CD8-positive, alpha-beta memory T cell (primary cell): ENCODE measurements at regions of chr10 and their contacts with region 1.

Region 1: DNA sequence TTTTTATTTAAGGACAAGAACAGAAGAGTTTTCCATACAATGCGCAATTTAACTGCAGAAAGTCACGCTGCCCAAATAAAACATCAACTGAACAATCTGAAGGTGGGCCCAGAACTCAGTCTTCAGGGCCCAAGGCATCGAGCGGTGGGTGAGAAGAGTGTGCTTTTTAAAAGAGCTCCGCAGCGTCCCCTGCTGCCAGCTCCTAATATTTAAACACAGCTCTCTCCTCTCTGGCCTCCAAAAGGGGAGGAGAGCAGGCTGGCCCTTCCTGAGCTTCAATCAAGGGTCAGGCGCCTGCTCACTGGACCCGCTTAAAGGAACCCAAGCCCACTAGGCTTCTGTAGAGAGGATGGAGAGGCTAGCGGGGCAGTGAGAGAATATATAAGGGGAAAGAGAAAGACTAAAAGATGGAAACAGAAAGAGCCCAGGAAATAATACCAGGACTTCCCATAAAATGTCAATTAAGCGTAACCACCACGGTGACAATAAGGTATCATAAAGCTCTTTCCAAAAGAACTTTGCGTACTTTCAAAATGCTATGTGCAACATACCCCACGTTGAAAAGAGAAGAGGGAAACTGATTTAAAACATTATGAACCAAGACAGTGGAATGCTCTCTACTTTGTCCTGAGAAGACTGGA is 2.8 kb downstream of the FAM53B start:
- DNase-seq: peak; percentile 69 to 82 (median 71)
- H3K4me3 ChIP-seq: peak overlapping the region; percentile 74
- H3K4me3 Mint-ChIP-seq: peak overlapping the region; percentile 95 to 100 (median 98)
- H3K27ac ChIP-seq: peak overlapping the region; percentile 53
- H3K27ac Mint-ChIP-seq: peak overlapping the region; percentile 89 to 98 (median 96)
- H3K4me1 ChIP-seq: peaks cover 72% of the 10 kb centered on the region
- H3K4me1 Mint-ChIP-seq: peaks cover 70 to 77% (median 77%) of the 10 kb centered on the region in 3 donors
- H3K27me3 ChIP-seq: no peaks in the 10 kb centered on the region
- H3K27me3 Mint-ChIP-seq: peaks cover 0 to 1% of the 10 kb centered on the region in 2 donors

Region 2: GRCh38 chr10:124453960-124454610 is 287.3 kb before region 1 on chr10:
- CTCF ChIA-PET with region 1: no interaction called
- POLR2A ChIA-PET with region 1: no interaction called
- DNase-seq: no peak
- H3K4me3 ChIP-seq: no peak overlapping the region
- H3K4me3 Mint-ChIP-seq: no peak overlapping the region
- H3K27ac ChIP-seq: no peak overlapping the region
- H3K27ac Mint-ChIP-seq: no peak overlapping the region
- H3K4me1 ChIP-seq: peaks cover 2% of the 10 kb centered on the region
- H3K4me1 Mint-ChIP-seq: peaks cover 9 to 15% (median 13%) of the 10 kb centered on the region in 3 donors
- H3K27me3 ChIP-seq: peaks cover 20% of the 10 kb centered on the region
- H3K27me3 Mint-ChIP-seq: peaks cover 57 to 72% of the 10 kb centered on the region in 2 donors

Region 3: GRCh38 chr10:124545351-124546054 is 195.9 kb before region 1 on chr10:
- CTCF ChIA-PET with region 1: interaction called, 154 read pairs
- POLR2A ChIA-PET with region 1: interaction called, 6 read pairs
- DNase-seq: no peak
- H3K4me3 ChIP-seq: no peak overlapping the region
- H3K4me3 Mint-ChIP-seq: peak overlapping the region in 5 of 7 donors; percentile 15 to 51 (median 19)
- H3K27ac ChIP-seq: no peak overlapping the region
- H3K27ac Mint-ChIP-seq: peak overlapping the region in 1 of 8 donors; percentile 58
- H3K4me1 ChIP-seq: peaks cover 14% of the 10 kb centered on the region
- H3K4me1 Mint-ChIP-seq: peaks cover 11 to 21% (median 19%) of the 10 kb centered on the region in 3 donors
- H3K27me3 ChIP-seq: no peaks in the 10 kb centered on the region
- H3K27me3 Mint-ChIP-seq: no peaks in the 10 kb centered on the region

Region 4: GRCh38 chr10:124632064-124632531 is 109.3 kb before region 1 on chr10:
- CTCF ChIA-PET with region 1: interaction called, 27 read pairs
- POLR2A ChIA-PET with region 1: interaction called, 4 read pairs
- DNase-seq: peak in 4 of 5 donors; percentile 26 to 64 (median 32)
- H3K4me3 ChIP-seq: no peak overlapping the region
- H3K4me3 Mint-ChIP-seq: peak overlapping the region in 1 of 7 donors; percentile 13
- H3K27ac ChIP-seq: no peak overlapping the region
- H3K27ac Mint-ChIP-seq: peak overlapping the region in 7 of 8 donors; percentile 50 to 94 (median 82)
- H3K4me1 ChIP-seq: peaks cover 64% of the 10 kb centered on the region
- H3K4me1 Mint-ChIP-seq: peaks cover 65 to 94% (median 81%) of the 10 kb centered on the region in 3 donors
- H3K27me3 ChIP-seq: no peaks in the 10 kb centered on the region
- H3K27me3 Mint-ChIP-seq: no peaks in the 10 kb centered on the region

Region 5: DNA sequence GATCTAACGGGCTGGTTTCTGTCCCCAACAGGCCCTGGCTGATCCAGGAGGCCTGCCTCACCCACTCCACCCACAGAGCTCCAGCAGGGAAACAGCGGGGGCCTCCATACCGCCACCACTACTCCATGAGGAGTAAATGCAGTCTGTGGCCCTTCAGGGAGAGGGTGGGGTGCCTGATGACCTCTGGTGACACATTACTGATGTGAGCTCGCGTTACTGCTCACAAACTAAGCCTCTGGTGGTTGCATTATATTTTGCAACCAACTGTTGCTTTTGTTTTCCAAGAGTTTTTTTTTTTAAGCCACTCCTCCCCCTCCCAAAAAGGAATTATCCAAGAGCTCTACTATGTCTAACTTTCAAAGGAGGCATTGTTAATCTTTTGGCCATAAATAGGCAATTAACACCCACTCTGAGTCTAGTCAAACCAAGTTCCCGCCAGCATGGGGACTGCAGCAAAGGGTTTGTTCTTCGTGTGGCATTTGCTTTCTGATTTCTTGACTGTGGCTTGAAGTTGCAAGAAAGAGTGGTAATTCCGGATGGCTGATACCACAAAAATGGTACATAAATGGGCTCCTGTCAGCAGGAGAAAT is 69.8 kb before region 1 on chr10:
- CTCF ChIA-PET with region 1: interaction called, 21 read pairs
- POLR2A ChIA-PET with region 1: interaction called, 4 read pairs
- DNase-seq: no peak
- H3K4me3 ChIP-seq: peak overlapping the region; percentile 3
- H3K4me3 Mint-ChIP-seq: peak overlapping the region; percentile 14 to 85 (median 59)
- H3K27ac ChIP-seq: peak overlapping the region; percentile 5
- H3K27ac Mint-ChIP-seq: peak overlapping the region; percentile 76 to 97 (median 88)
- H3K4me1 ChIP-seq: peaks cover 100% of the 10 kb centered on the region
- H3K4me1 Mint-ChIP-seq: peaks cover 87 to 98% (median 95%) of the 10 kb centered on the region in 3 donors
- H3K27me3 ChIP-seq: no peaks in the 10 kb centered on the region
- H3K27me3 Mint-ChIP-seq: no peaks in the 10 kb centered on the region

Region 6: DNA sequence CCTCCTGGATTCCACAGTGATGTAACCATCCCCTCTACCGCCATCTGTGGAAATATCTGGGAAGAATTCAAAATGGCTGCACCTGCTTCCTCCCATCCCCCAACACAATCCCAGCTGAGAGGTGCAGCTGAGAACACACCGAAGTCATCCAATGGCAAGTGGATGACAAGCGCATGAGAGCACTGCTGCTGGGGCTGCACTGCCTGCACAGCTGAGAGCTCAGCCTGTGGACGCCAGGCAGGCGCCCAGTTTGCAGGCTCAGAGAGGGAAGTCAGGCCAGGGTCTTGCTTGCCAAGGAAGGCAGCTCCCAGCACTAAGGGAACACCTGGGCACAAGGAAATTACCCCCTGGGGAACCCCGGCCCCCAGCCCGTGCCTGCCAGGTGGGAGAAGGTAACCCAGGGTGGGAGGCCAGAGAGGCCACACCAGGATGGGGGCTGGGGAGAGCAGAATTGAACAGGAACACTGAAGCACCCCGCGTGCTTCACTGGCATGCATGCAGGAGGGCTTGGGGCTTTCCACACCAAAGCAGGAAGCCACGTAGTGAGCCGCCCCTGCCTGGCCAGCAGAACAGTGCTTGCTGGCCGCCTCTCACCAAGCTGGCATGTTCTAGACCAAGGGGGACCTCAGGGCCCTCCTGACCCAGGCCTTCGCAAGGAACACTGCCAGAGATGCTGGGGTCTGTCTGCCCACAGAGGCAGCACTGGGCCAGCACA is 43.4 kb before region 1 on chr10:
- CTCF ChIA-PET with region 1: interaction called, 20 read pairs
- POLR2A ChIA-PET with region 1: interaction called, 8 read pairs
- DNase-seq: peak in 4 of 5 donors; percentile 39 to 72 (median 42)
- H3K4me3 ChIP-seq: peak overlapping the region; percentile 36
- H3K4me3 Mint-ChIP-seq: peak overlapping the region in 6 of 7 donors; percentile 79 to 87 (median 82)
- H3K27ac ChIP-seq: peak overlapping the region; percentile 59
- H3K27ac Mint-ChIP-seq: peak overlapping the region; percentile 93 to 99 (median 98)
- H3K4me1 ChIP-seq: peaks cover 95% of the 10 kb centered on the region
- H3K4me1 Mint-ChIP-seq: peaks cover 95 to 100% (median 99%) of the 10 kb centered on the region in 3 donors
- H3K27me3 ChIP-seq: no peaks in the 10 kb centered on the region
- H3K27me3 Mint-ChIP-seq: no peaks in the 10 kb centered on the region

Region 7: GRCh38 chr10:124755581-124755980 is 14.2 kb after region 1 on chr10:
- CTCF ChIA-PET with region 1: interaction called, 15 read pairs
- POLR2A ChIA-PET with region 1: no interaction called
- DNase-seq: no peak
- H3K4me3 ChIP-seq: no peak overlapping the region
- H3K4me3 Mint-ChIP-seq: no peak overlapping the region
- H3K27ac ChIP-seq: no peak overlapping the region
- H3K27ac Mint-ChIP-seq: no peak overlapping the region
- H3K4me1 ChIP-seq: no peaks in the 10 kb centered on the region
- H3K4me1 Mint-ChIP-seq: peaks cover 0 to 4% (median 1%) of the 10 kb centered on the region in 3 donors
- H3K27me3 ChIP-seq: no peaks in the 10 kb centered on the region
- H3K27me3 Mint-ChIP-seq: no peaks in the 10 kb centered on the region

Region 8: DNA sequence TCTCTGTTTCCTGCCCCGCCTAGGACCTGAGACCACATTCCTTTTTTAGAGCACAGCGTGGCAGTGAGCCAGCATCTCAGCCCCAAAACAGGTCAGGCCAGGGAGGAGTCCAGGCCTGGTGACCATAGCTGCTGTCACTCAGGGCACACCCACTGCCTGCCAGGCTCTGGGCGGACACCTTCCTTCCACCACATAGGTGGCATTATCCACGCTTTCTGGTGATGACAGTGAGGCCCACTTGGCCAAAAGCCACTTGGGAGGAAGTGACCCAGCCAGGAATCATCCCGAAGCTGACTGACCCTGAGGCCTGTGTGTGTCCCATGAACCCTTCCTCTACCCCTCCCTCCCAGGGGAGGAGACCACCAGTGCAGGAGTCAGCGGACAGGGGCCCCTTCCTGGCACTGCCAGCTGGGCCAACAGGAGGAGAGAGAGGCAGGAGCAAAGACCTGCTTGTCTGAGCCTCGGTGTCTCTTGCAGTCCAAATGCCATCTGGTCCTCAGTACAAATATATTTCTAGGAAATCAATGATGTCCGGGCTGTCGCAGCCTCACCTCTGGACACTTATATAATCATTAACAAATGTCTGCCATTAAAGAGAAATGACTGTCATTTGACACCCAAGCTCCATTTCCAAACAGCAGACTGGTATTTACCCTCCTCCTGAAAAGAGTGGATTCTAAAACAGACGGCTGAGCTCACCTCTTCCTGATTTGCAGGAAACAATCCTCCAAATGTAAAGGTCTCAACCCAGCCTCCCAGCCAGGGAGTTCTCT is 123.2 kb after region 1 on chr10:
- CTCF ChIA-PET with region 1: no interaction called
- POLR2A ChIA-PET with region 1: no interaction called
- DNase-seq: no peak
- H3K4me3 ChIP-seq: no peak overlapping the region
- H3K4me3 Mint-ChIP-seq: no peak overlapping the region
- H3K27ac ChIP-seq: no peak overlapping the region
- H3K27ac Mint-ChIP-seq: no peak overlapping the region
- H3K4me1 ChIP-seq: no peaks in the 10 kb centered on the region
- H3K4me1 Mint-ChIP-seq: no peaks in the 10 kb centered on the region
- H3K27me3 ChIP-seq: no peaks in the 10 kb centered on the region
- H3K27me3 Mint-ChIP-seq: peaks cover 5 to 20% of the 10 kb centered on the region in 2 donors

Region 9: DNA sequence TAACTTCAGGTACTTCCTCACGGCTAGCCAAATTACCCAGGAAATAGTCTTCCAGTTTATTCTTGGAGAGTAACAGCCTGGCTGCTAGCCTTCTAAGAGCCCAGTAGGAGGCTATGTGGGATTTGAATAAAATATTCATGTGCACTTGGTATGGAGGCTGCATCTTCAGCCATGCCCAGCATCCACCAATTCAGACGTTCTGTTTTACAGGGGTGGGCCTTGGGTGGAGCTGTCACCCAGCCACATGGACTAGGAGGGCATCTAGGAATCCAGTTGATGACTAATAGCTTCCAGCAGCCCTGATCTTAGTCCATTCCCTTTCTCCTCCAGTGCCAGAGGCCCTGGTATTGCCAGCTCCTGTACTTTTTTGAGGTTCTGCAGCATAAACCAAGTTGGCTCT is 134.2 kb after region 1 on chr10:
- CTCF ChIA-PET with region 1: no interaction called
- POLR2A ChIA-PET with region 1: no interaction called
- DNase-seq: no peak
- H3K4me3 ChIP-seq: no peak overlapping the region
- H3K4me3 Mint-ChIP-seq: no peak overlapping the region
- H3K27ac ChIP-seq: no peak overlapping the region
- H3K27ac Mint-ChIP-seq: no peak overlapping the region
- H3K4me1 ChIP-seq: no peaks in the 10 kb centered on the region
- H3K4me1 Mint-ChIP-seq: no peaks in the 10 kb centered on the region
- H3K27me3 ChIP-seq: no peaks in the 10 kb centered on the region
- H3K27me3 Mint-ChIP-seq: peaks cover 16 to 21% of the 10 kb centered on the region in 2 donors

Region 10: GRCh38 chr10:125209591-125210355 is 468.4 kb after region 1 on chr10:
- CTCF ChIA-PET with region 1: no interaction called
- POLR2A ChIA-PET with region 1: no interaction called
- DNase-seq: no peak
- H3K4me3 ChIP-seq: no peak overlapping the region
- H3K4me3 Mint-ChIP-seq: no peak overlapping the region
- H3K27ac ChIP-seq: no peak overlapping the region
- H3K27ac Mint-ChIP-seq: no peak overlapping the region
- H3K4me1 ChIP-seq: no peaks in the 10 kb centered on the region
- H3K4me1 Mint-ChIP-seq: no peaks in the 10 kb centered on the region
- H3K27me3 ChIP-seq: no peaks in the 10 kb centered on the region
- H3K27me3 Mint-ChIP-seq: peaks cover 0 to 8% of the 10 kb centered on the region in 2 donors